GM13977 (cell line): ENCODE measurements at regions of chr12 and their contacts with region 1.

Region 1: DNA sequence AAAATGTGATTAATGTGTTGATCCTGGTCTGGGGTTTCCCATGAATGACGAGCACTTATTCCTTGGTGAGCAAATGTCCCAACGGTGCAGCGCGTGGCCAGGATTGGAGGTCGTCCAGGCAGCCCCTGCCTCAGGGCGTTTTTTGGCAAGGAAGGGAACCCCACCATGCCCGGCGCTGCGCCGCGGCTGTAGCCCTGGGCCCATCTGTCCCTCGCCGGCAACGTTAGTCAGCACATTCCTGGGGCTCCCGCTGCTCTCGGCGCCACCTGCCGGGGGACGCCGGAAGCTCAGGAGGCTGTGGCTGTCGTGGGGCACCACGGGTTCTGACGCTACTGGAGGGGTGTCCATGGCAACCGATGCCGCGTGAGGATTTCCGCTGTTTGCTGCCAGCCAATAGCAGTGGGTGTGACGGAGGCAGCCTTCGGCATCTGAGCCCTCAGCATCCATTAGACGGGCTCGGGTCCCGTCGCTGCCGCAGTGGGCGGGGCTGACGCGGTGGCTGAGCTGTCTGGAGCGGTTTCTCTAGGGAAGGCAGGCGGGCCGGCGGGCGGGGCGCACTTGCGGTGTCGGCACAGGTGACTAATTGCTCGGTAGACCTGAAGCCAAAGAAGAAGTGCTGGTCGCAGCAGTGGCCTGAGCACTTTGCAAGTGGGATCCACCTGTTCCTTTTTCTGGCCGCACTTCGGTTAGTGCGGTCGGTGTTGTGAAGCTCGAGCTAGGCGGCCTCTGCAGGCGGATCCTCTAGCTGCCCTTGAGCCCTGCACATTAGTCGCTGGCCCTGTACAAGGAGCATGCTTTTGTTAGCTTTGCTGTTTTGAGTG is 29.5 kb downstream of the RAB35 start:
- DNase-seq: peak; percentile 99
- CTCF ChIP-seq: peak; percentile 98

Region 2: GRCh38 chr12:119695034-119695433 is 392.0 kb before region 1 on chr12:
- in situ Hi-C with region 1: loop called (anchors 25 kb)
- DNase-seq: no peak
- CTCF ChIP-seq: peak; percentile 41

Region 3: GRCh38 chr12:120150919-120151525 is 64.0 kb after region 1 on chr12:
- in situ Hi-C with region 1: no loop called
- DNase-seq: no peak
- CTCF ChIP-seq: no peak